Panc1 (cell line): ENCODE measurements at regions of chr6 and their contacts with region 1.

Region 1: DNA sequence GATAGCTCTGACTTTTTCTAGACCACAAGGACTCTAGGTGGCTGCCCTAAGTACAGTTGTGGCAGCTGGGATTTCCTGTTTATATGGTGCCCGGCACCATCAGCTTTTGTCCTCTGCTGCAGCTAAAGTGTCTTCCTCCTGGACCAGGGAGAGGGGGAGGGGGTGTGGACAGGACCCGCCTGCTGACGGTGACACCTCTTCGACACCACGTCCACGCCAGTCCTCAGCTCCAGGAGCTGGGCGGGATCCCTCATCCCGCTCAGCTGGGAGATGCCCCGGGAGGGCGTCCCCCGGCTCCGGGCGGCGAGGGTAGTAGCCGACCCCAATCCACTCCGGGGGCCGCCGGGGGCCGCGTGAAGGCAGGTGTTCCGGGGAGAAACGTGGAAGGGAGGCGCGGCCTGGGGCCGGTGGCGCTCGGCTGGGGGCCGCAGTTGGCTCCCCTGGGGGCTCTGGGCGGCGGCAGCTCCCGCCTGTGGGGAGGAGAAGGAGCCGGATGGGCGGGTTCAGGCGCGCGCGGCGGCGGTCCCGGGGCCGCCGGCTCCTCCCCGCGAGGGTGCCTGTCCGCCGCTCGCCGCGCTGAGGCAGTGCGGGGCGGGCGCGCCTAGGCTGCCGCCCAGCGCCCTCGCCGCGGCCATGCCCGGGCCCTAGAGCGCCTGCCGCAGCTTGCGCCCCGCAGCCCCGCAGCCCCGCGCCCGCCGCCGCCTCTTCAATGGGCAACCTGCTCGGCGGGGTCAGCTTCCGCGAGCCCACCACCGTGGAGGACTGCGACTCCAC is at the start of gene OGFRL1:
- DNase-seq: peak; percentile 25
- ATAC-seq: peak; percentile 98
- H3K4me3 ChIP-seq: peak within 1 kb of the TSS; percentile 69 to 75
- H3K27ac ChIP-seq: peak within 1 kb of the TSS; percentile 79
- H3K4me1 ChIP-seq: peaks cover 21% of the 10 kb centered on the region
- H3K27me3 ChIP-seq: no peaks in the 10 kb centered on the region
- CTCF ChIP-seq: peak; percentile 71
- total RNA-seq, gene OGFRL1: 17.2 TPM

Region 2: GRCh38 chr6:71197780-71198179 is 90.6 kb before region 1 on chr6:
- CTCF ChIA-PET with region 1: no interaction called
- POLR2A ChIA-PET with region 1: interaction called, 16 read pairs
- in situ Hi-C with region 1: no loop called
- intact Hi-C with region 1: no loop called
- DNase-seq: no peak
- ATAC-seq: no peak
- H3K4me3 ChIP-seq: no peak overlapping the region
- H3K27ac ChIP-seq: no peak overlapping the region
- H3K4me1 ChIP-seq: no peaks in the 10 kb centered on the region
- H3K27me3 ChIP-seq: no peaks in the 10 kb centered on the region
- CTCF ChIP-seq: no peak

Region 3: DNA sequence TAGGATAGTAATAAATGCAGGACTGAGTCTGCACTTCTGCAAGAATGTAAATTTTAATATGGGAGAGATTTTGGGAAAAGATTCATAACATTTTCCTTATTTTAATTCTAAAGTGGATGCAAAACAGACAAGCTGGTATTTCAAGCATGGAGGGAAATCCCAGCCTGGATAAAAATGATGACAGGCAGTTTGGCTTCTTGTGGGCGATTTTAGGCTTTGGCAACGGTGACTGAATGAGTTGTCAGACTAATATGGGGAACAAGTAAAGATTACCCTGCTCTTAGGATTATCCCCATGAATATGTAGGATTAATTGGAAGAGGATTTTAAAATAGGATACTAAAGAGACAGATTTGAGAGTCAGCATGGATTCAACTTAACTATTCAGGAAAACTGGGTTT is 21.2 kb after region 1 on chr6:
- CTCF ChIA-PET with region 1: no interaction called
- POLR2A ChIA-PET with region 1: interaction called, 12 read pairs
- in situ Hi-C with region 1: no loop called
- intact Hi-C with region 1: no loop called
- DNase-seq: no peak
- ATAC-seq: no peak
- H3K4me3 ChIP-seq: no peak overlapping the region
- H3K27ac ChIP-seq: no peak overlapping the region
- H3K4me1 ChIP-seq: no peaks in the 10 kb centered on the region
- H3K27me3 ChIP-seq: no peaks in the 10 kb centered on the region
- CTCF ChIP-seq: no peak